ENCODE measurements at regions of chr16 and their contacts with region 1.

Region 1: GRCh38 chr16:70679666-70680494 is 6.0 kb downstream of the MTSS2 start:
- DNase-seq: peak; percentile 72
- ATAC-seq: peak; percentile 79
- H3K4me3 Mint-ChIP-seq: no peak overlapping the region
- H3K27ac Mint-ChIP-seq: no peak overlapping the region
- H3K4me1 Mint-ChIP-seq: peaks cover 3% of the 10 kb centered on the region; the same call in 1 of the 2 replicates
- H3K27me3 Mint-ChIP-seq: no peaks in the 10 kb centered on the region
- CTCF ChIP-seq: peak; percentile 53; the same call in 1 of the 2 replicates

Region 2: DNA sequence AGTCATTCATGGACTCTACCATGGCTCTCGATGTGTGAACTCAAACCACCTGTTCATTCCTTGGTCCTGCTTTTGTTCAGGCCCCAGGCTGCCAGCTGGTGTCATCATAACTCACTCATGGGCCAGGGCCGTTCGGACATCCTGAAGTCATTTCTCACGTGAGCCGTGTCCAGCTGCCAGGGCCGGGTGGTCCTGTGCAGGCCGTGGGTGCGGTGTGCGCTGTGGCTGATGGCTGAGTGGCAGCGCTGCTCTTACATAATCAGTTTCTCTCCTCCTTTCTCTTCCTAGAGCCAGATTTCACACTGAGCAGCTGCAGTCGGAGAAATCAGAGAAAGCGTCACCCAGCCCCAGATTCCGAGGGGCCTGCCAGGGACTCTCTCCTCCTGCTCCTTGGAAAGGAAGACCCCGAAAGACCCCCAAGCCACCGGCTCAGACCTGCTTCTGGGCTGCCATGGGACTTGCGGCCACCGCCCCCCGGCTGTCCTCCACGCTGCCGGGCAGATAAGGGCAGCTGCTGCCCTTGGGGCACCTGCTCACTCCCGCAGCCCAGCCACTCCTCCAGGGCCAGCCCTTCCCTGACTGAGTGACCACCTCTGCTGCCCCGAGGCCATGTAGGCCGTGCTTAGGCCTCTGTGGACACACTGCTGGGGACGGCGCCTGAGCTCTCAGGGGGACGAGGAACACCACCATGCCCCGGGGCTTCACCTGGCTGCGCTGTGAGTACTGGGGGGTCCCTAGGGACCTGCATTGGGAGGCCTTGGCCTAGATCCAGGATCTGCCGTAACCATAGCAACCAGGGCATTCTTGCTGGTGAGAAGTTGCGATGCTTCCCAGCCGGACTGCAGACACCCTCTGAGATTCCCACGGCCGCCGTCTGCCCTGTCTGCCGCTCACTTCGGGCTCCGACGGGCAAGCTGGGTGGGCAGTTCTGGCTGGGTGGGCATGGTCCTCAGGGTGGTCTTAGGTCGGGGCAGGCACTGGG is 33.3 kb before region 1 on chr16 and contains the start of gene IL34:
- CTCF ChIA-PET with region 1: no interaction called
- POLR2A ChIA-PET with region 1: no interaction called
- DNase-seq: no peak
- ATAC-seq: no peak
- H3K4me3 Mint-ChIP-seq: no peak within 1 kb of the TSS
- H3K27ac Mint-ChIP-seq: peak within 1 kb of the TSS; percentile 65; the same call in 1 of the 2 replicates
- H3K4me1 Mint-ChIP-seq: peaks cover 14% of the 10 kb centered on the region
- H3K27me3 Mint-ChIP-seq: no peaks in the 10 kb centered on the region
- CTCF ChIP-seq: no peak
- total RNA-seq, gene IL34: 6.0 to 8.8 TPM (median 7.5 TPM) in 3 replicates

Region 3: DNA sequence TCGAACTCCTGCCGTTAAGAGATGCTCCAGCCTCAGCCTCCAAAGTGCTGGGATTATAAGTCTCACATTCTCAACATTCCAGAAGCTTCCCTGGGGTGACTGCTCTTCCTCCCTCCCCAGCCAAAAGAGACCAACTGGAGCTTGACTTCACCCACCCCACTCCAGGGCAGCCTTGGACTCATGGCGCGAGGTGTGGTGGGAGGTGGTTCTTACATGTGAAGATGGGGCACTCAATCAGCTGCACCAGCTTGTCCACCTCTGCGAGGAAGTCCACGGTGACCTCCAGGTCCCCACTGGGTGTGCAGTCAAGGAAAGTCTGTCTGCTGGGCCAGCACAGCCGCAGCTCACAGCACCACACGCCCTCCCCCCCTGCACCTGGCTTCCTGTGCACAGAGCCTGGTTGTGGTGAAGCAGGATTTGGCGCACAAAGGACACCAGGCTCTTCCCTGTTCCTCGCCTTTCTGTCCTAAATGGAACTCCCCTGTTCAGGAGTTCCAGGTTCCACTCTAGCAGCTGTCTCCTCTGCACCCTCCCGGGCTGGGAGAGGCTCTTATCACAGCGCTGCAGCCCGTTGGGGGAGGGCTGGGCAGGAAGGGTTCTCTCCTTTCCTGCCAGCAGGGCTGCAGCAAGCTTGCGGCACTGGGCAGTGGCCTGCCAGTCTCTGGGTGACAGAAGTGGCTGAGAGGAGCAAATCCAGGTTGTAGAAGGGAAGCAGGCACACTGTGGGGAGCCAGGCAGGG is 15.6 kb after region 1 on chr16:
- CTCF ChIA-PET with region 1: interaction called, 15 read pairs
- POLR2A ChIA-PET with region 1: no interaction called
- DNase-seq: no peak
- ATAC-seq: peak; percentile 10
- H3K4me3 Mint-ChIP-seq: no peak overlapping the region; the same call in 1 of the 2 replicates
- H3K27ac Mint-ChIP-seq: peak overlapping the region; percentile 95
- H3K4me1 Mint-ChIP-seq: peaks cover 24% of the 10 kb centered on the region
- H3K27me3 Mint-ChIP-seq: no peaks in the 10 kb centered on the region
- CTCF ChIP-seq: no peak

Region 4: GRCh38 chr16:70726892-70727361 is 47.0 kb after region 1 on chr16:
- CTCF ChIA-PET with region 1: interaction called, 10 read pairs
- POLR2A ChIA-PET with region 1: no interaction called
- DNase-seq: no peak
- ATAC-seq: no peak
- H3K4me3 Mint-ChIP-seq: no peak overlapping the region
- H3K27ac Mint-ChIP-seq: no peak overlapping the region
- H3K4me1 Mint-ChIP-seq: peaks cover 4% of the 10 kb centered on the region
- H3K27me3 Mint-ChIP-seq: no peaks in the 10 kb centered on the region
- CTCF ChIP-seq: no peak

Region 5: DNA sequence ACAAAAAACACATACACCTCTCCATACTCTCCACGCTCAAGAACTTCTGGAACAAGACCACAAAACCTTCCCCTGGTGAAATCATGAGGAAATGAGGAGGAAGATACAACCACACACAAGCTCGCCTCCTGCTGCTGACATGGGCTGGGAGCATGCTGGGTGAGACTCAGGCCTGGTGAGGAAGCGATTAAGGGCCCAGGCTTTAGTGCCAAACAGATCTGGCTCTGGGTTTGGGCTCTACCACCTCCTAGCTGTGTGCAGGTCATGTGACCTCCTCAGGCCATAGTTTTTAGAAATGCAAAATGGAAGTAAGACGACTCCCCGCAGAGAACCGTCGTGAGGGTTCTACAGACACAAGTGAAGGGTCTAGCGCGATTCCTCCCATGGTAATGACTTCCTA is 79.8 kb after region 1 on chr16:
- CTCF ChIA-PET with region 1: interaction called, 11 read pairs
- POLR2A ChIA-PET with region 1: no interaction called
- DNase-seq: no peak
- ATAC-seq: peak; percentile 61
- H3K4me3 Mint-ChIP-seq: no peak overlapping the region
- H3K27ac Mint-ChIP-seq: peak overlapping the region; percentile 57; the same call in 1 of the 2 replicates
- H3K4me1 Mint-ChIP-seq: peaks cover 17% of the 10 kb centered on the region
- H3K27me3 Mint-ChIP-seq: no peaks in the 10 kb centered on the region
- CTCF ChIP-seq: no peak

Region 6: GRCh38 chr16:70778901-70779309 is 99.0 kb after region 1 on chr16:
- CTCF ChIA-PET with region 1: interaction called, 11 read pairs
- POLR2A ChIA-PET with region 1: no interaction called
- DNase-seq: peak; percentile 90
- ATAC-seq: peak; percentile 94
- H3K4me3 Mint-ChIP-seq: no peak overlapping the region
- H3K27ac Mint-ChIP-seq: peak overlapping the region; percentile 89; the same call in 1 of the 2 replicates
- H3K4me1 Mint-ChIP-seq: peaks cover 2% of the 10 kb centered on the region; the same call in 1 of the 2 replicates
- H3K27me3 Mint-ChIP-seq: no peaks in the 10 kb centered on the region
- CTCF ChIP-seq: no peak

Measured in WTC11 (cell line).